ENCODE measurements at regions of chr9 and their contacts with region 1.

Region 1: GRCh38 chr9:91775011-91775707 is 174.9 kb downstream of the ROR2 start:
- DNase-seq: peak; percentile 66 to 75
- ATAC-seq: peak; percentile 83 to 95
- H3K4me3 ChIP-seq: no peak overlapping the region
- H3K27ac ChIP-seq: no peak overlapping the region
- H3K4me1 ChIP-seq: no peaks in the 10 kb centered on the region
- CTCF ChIP-seq: peak; percentile 77
- EP300 ChIP-seq: no peak
- POLR2A ChIP-seq: no peak
- RAD21 ChIP-seq: peak; percentile 78 to 89

Region 2: GRCh38 chr9:91611630-91612029 is 163.5 kb before region 1 on chr9:
- CTCF ChIA-PET with region 1: no interaction called
- POLR2A ChIA-PET with region 1: no interaction called
- DNase-seq: peak in 1 of 2 experiments; percentile 9
- ATAC-seq: no peak
- H3K4me3 ChIP-seq: no peak overlapping the region
- H3K27ac ChIP-seq: no peak overlapping the region
- H3K4me1 ChIP-seq: no peaks in the 10 kb centered on the region
- CTCF ChIP-seq: no peak
- EP300 ChIP-seq: no peak
- POLR2A ChIP-seq: no peak
- RAD21 ChIP-seq: no peak

Region 3: GRCh38 chr9:91758491-91758981 is 16.6 kb before region 1 on chr9:
- CTCF ChIA-PET with region 1: interaction called, 30 read pairs
- POLR2A ChIA-PET with region 1: no interaction called
- DNase-seq: peak; percentile 55 to 57
- ATAC-seq: peak; percentile 75 to 96; a peak in 4 of 6 replicates
- H3K4me3 ChIP-seq: no peak overlapping the region
- H3K27ac ChIP-seq: no peak overlapping the region
- H3K4me1 ChIP-seq: 0 out of 3 replicates have a peak, but pooled peaks cover 3% of the 10 kb centered on the region
- CTCF ChIP-seq: peak; percentile 42; the same call in 2 of the 3 replicates
- EP300 ChIP-seq: no peak
- POLR2A ChIP-seq: no peak
- RAD21 ChIP-seq: peak; percentile 38 to 51; a peak in 3 of 5 replicates

Region 4: DNA sequence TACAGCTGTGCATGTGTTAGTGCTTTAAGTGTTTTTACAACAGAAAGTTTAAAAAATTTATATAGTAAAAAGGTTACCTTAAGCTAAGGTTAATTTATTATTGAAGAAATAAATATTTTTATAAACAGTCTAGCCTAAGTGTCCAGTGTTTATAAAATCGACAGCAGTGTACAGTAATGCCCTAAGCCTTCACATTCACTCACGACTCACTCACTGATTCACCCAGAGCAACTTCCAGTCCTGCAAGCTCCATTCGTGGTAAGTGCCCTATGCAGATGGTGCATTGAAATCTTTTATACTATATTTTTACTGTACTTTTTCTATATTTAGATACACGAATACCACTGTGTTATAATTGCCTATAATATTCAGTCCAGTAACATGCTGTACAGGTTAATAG is 15.8 kb after region 1 on chr9:
- CTCF ChIA-PET with region 1: interaction called, 31 read pairs
- POLR2A ChIA-PET with region 1: no interaction called
- DNase-seq: no peak
- ATAC-seq: no peak
- H3K4me3 ChIP-seq: no peak overlapping the region
- H3K27ac ChIP-seq: no peak overlapping the region
- H3K4me1 ChIP-seq: no peaks in the 10 kb centered on the region
- CTCF ChIP-seq: no peak
- EP300 ChIP-seq: no peak
- POLR2A ChIP-seq: no peak
- RAD21 ChIP-seq: no peak

Region 5: DNA sequence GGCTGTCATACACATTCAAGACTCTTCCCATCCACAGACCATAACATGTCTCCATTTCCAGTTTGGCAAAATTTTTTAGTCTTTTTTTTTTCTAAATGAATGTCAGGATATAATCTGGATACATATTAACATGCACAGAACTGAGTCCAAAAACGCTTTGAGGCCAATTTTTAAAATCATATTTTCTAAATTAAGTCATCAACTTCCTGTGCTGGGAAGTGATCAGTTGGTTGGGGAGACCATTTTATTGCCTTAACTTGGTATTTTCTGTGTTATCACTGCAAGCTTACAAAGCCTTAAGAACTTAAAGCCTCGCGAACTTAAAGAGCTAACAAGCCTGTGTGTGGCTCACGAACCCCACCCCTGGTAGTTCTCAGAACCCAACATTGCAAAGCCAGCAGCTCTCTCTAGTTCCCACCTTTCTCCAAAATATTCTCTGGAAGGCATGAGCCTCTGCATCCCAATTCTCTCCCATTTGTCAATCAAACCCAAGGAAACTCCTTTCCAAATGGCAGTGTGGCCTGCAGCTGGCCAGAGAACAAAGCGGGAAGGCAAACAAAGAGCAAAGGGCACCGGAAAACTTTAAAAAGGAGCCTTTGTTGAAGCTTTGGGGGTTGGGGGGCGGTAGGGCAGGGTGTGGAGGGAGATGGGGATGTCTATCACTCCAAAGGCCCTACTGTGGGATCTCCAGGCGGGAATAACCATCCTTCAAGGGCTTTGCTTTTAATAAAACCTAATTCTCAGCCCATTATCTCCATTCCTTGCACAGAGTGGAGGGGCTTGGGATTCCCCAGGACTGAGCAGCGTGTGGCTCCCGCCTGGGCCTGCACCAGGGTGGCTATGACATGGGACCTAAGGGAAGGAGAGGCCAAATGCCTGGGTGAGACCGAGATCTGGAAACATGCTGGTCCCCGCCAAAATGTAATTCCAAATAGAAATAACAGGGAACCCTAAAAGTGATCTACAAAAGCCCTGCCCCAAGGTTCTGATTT is 109.8 kb after region 1 on chr9:
- CTCF ChIA-PET with region 1: no interaction called
- POLR2A ChIA-PET with region 1: no interaction called
- DNase-seq: no peak
- ATAC-seq: no peak
- H3K4me3 ChIP-seq: no peak overlapping the region
- H3K27ac ChIP-seq: no peak overlapping the region
- H3K4me1 ChIP-seq: no peaks in the 10 kb centered on the region
- CTCF ChIP-seq: no peak
- EP300 ChIP-seq: no peak
- POLR2A ChIP-seq: no peak
- RAD21 ChIP-seq: no peak